CD8-positive, alpha-beta T cell (primary cell): ENCODE measurements at regions of chrX and their contacts with region 1.

Region 1: GRCh38 chrX:3713225-3713936 is at the start of gene PRKX:
- DNase-seq: peak; percentile 46 to 88 (median 68)
- ATAC-seq: peak; percentile 87
- H3K4me3 ChIP-seq: peak within 1 kb of the TSS; percentile 60 to 64
- H3K4me3 Mint-ChIP-seq: peak within 1 kb of the TSS; percentile 95
- H3K27ac ChIP-seq: peak within 1 kb of the TSS; percentile 70 to 79
- H3K27ac Mint-ChIP-seq: peak within 1 kb of the TSS; percentile 94
- H3K4me1 ChIP-seq: peaks cover 12% of the 10 kb centered on the region
- H3K4me1 Mint-ChIP-seq: peaks cover 16% of the 10 kb centered on the region
- H3K27me3 ChIP-seq: no peaks in the 10 kb centered on the region
- H3K27me3 Mint-ChIP-seq: no peaks in the 10 kb centered on the region
- CTCF ChIP-seq: no peak
- total RNA-seq, gene PRKX: 56.5 to 56.6 TPM

Region 2: GRCh38 chrX:3651276-3651675 is 62.1 kb before region 1 on chrX:
- CTCF ChIA-PET with region 1: interaction called, 5 read pairs
- POLR2A ChIA-PET with region 1: no interaction called
- intact Hi-C with region 1: loop called in 1 of 2 experiments (anchors 5 kb)
- DNase-seq: peak in 3 of 9 experiments; percentile 16 to 45 (median 34)
- ATAC-seq: no peak
- H3K4me3 ChIP-seq: no peak overlapping the region
- H3K4me3 Mint-ChIP-seq: no peak overlapping the region
- H3K27ac ChIP-seq: no peak overlapping the region
- H3K27ac Mint-ChIP-seq: no peak overlapping the region
- H3K4me1 ChIP-seq: no peaks in the 10 kb centered on the region
- H3K4me1 Mint-ChIP-seq: no peaks in the 10 kb centered on the region
- H3K27me3 ChIP-seq: no peaks in the 10 kb centered on the region
- H3K27me3 Mint-ChIP-seq: no peaks in the 10 kb centered on the region
- CTCF ChIP-seq: peak; percentile 76

Region 3: GRCh38 chrX:3659761-3660160 is 53.6 kb before region 1 on chrX:
- CTCF ChIA-PET with region 1: no interaction called
- POLR2A ChIA-PET with region 1: no interaction called
- intact Hi-C with region 1: loop called (anchors 5 kb)
- DNase-seq: no peak
- ATAC-seq: no peak
- H3K4me3 ChIP-seq: no peak overlapping the region
- H3K4me3 Mint-ChIP-seq: no peak overlapping the region
- H3K27ac ChIP-seq: no peak overlapping the region
- H3K27ac Mint-ChIP-seq: no peak overlapping the region
- H3K4me1 ChIP-seq: no peaks in the 10 kb centered on the region
- H3K4me1 Mint-ChIP-seq: peaks cover 2% of the 10 kb centered on the region
- H3K27me3 ChIP-seq: no peaks in the 10 kb centered on the region
- H3K27me3 Mint-ChIP-seq: no peaks in the 10 kb centered on the region
- CTCF ChIP-seq: no peak

Region 4: GRCh38 chrX:3811331-3812311 is 98.2 kb after region 1 on chrX:
- CTCF ChIA-PET with region 1: interaction called, 3 read pairs
- POLR2A ChIA-PET with region 1: interaction called, 3 read pairs
- intact Hi-C with region 1: loop called in 1 of 2 experiments (anchors 1 kb)
- DNase-seq: peak in 7 of 9 experiments; percentile 13 to 81 (median 36)
- ATAC-seq: no peak
- H3K4me3 ChIP-seq: no peak overlapping the region
- H3K4me3 Mint-ChIP-seq: peak overlapping the region; percentile 57
- H3K27ac ChIP-seq: no peak overlapping the region
- H3K27ac Mint-ChIP-seq: no peak overlapping the region
- H3K4me1 ChIP-seq: peaks cover 1% of the 10 kb centered on the region
- H3K4me1 Mint-ChIP-seq: peaks cover 9% of the 10 kb centered on the region
- H3K27me3 ChIP-seq: no peaks in the 10 kb centered on the region
- H3K27me3 Mint-ChIP-seq: peaks cover 11% of the 10 kb centered on the region
- CTCF ChIP-seq: peak; percentile 57